ENCODE measurements at regions of chr4 and their contacts with region 1.

Region 1: DNA sequence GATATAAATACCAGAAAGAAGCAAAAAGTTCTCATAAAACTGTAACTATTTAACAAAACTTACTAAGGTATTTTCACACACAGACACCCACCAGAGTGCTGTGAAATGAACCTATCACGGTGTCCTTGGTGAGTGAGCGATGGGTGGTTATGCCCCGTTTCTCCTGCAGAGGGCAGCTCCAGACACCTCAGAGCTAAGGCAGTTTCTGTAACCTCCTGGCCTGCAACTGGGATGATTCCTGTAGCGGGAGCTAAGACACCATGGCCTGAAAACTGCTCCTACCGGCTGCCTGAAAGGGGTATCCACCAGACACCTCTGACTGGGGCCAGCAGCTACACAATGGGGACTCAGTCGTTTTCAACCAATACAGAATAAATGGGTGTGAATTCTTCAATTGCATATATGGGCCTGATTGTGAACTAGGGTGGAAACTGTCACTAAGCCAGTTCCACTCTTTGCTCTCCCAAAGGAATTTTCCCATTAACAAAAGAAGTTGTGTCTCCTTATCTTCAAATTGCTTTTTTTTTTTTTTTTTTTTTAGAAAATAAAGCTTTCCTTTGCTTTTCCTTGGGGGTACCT is 2375.8 kb upstream of the TENM3 start:
- DNase-seq: peak; percentile 89
- ATAC-seq: peak; percentile 100
- H3K4me3 Mint-ChIP-seq: no peak overlapping the region
- H3K27ac Mint-ChIP-seq: no peak overlapping the region
- H3K4me1 Mint-ChIP-seq: no peaks in the 10 kb centered on the region
- H3K27me3 Mint-ChIP-seq: no peaks in the 10 kb centered on the region
- CTCF ChIP-seq: peak; percentile 75

Region 2: DNA sequence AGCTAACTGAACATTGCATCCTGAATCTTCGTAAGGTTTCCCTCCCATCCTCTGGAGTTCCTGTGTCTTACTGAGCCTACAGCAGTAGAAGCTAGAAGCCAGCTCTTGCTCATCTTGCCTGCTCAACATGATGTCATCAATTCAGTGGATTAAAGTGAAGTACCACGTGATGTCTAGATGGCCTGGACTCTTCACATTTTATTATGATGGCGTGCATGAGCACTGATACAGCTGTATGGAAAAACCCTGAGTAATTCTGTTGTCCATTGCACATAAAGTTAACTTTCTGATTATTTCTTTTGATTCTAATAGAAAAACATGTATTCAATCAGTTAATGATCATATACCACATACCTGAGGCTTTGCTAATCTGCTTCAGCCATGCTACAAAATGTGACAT is 11.9 kb before region 1 on chr4:
- CTCF ChIA-PET with region 1: interaction called, 10 read pairs
- POLR2A ChIA-PET with region 1: no interaction called
- DNase-seq: no peak
- ATAC-seq: no peak
- H3K4me3 Mint-ChIP-seq: no peak overlapping the region
- H3K27ac Mint-ChIP-seq: no peak overlapping the region
- H3K4me1 Mint-ChIP-seq: no peaks in the 10 kb centered on the region
- H3K27me3 Mint-ChIP-seq: no peaks in the 10 kb centered on the region
- CTCF ChIP-seq: no peak

Region 3: DNA sequence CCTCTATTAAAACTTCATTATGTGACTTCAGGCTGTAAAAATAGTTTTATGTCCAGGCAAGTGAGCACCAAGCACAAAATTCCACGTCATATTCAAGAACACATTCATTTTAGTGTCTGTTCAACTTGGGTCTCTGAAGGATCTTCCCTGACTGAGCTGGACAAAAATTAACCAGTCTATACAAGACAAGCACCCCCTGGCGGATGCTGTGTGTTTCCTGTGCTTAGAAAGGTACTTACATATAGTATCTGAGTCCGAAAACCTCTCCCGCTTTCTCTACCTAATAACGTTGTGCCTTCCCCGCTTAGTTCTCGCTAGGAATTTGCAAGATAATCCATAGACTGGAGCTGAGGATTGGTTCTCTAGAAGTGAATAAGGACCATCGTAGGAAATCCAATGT is 161.3 kb after region 1 on chr4:
- CTCF ChIA-PET with region 1: interaction called, 40 read pairs
- POLR2A ChIA-PET with region 1: no interaction called
- DNase-seq: peak; percentile 68
- ATAC-seq: peak; percentile 89
- H3K4me3 Mint-ChIP-seq: no peak overlapping the region
- H3K27ac Mint-ChIP-seq: no peak overlapping the region
- H3K4me1 Mint-ChIP-seq: no peaks in the 10 kb centered on the region
- H3K27me3 Mint-ChIP-seq: no peaks in the 10 kb centered on the region
- CTCF ChIP-seq: no peak

Region 4: GRCh38 chr4:180058731-180059215 is 191.4 kb after region 1 on chr4:
- CTCF ChIA-PET with region 1: no interaction called
- POLR2A ChIA-PET with region 1: no interaction called
- DNase-seq: peak; percentile 69
- ATAC-seq: peak; percentile 45
- H3K4me3 Mint-ChIP-seq: peak overlapping the region; percentile 89
- H3K27ac Mint-ChIP-seq: no peak overlapping the region
- H3K4me1 Mint-ChIP-seq: peaks cover 23% of the 10 kb centered on the region
- H3K27me3 Mint-ChIP-seq: peaks cover 31% of the 10 kb centered on the region
- CTCF ChIP-seq: no peak